ENCODE measurements at regions of chr1 and their contacts with region 1.

Region 1: GRCh38 chr1:100423832-100424337 is 71.6 kb downstream of the CDC14A start:
- DNase-seq: peak in 17 of 35 experiments; percentile 6 to 56 (median 20)
- ATAC-seq: peak; percentile 69 to 76 (median 74)
- H3K4me3 ChIP-seq: peak overlapping the region in 1 of 2 donors; percentile 35
- H3K4me3 Mint-ChIP-seq: peak overlapping the region; percentile 80 to 89 (median 82)
- H3K27ac ChIP-seq: peak overlapping the region; percentile 71
- H3K27ac Mint-ChIP-seq: peak overlapping the region; percentile 97 to 98
- H3K4me1 ChIP-seq: peaks cover 28 to 30% of the 10 kb centered on the region in 2 experiments
- H3K4me1 Mint-ChIP-seq: peaks cover 61 to 82% (median 81%) of the 10 kb centered on the region in 3 donors
- H3K27me3 ChIP-seq: no peaks in the 10 kb centered on the region
- H3K27me3 Mint-ChIP-seq: no peaks in the 10 kb centered on the region

Region 2: GRCh38 chr1:100351095-100351891 is 72.6 kb before region 1 on chr1:
- CTCF ChIA-PET with region 1: interaction called in 1 of 2 experiments, 13 read pairs
- POLR2A ChIA-PET with region 1: interaction called, 6 to 17 read pairs
- DNase-seq: peak; percentile 71 to 92 (median 85)
- ATAC-seq: peak; percentile 66 to 79 (median 70)
- H3K4me3 ChIP-seq: peak overlapping the region; percentile 67 to 96
- H3K4me3 Mint-ChIP-seq: peak overlapping the region; percentile 90 to 100 (median 96)
- H3K27ac ChIP-seq: peak overlapping the region; percentile 87
- H3K27ac Mint-ChIP-seq: peak overlapping the region; percentile 95 to 98
- H3K4me1 ChIP-seq: peaks cover 16 to 22% of the 10 kb centered on the region in 2 experiments
- H3K4me1 Mint-ChIP-seq: peaks cover 27 to 39% (median 30%) of the 10 kb centered on the region in 3 donors
- H3K27me3 ChIP-seq: no peaks in the 10 kb centered on the region
- H3K27me3 Mint-ChIP-seq: no peaks in the 10 kb centered on the region

Region 3: GRCh38 chr1:100413035-100413434 is 10.8 kb before region 1 on chr1:
- CTCF ChIA-PET with region 1: interaction called, 3 to 12 read pairs
- POLR2A ChIA-PET with region 1: interaction called, 7 to 8 read pairs
- DNase-seq: no peak
- ATAC-seq: peak in 3 of 4 experiments; percentile 34 to 65 (median 49)
- H3K4me3 ChIP-seq: no peak overlapping the region
- H3K4me3 Mint-ChIP-seq: peak overlapping the region; percentile 7 to 50 (median 38)
- H3K27ac ChIP-seq: peak overlapping the region; percentile 65
- H3K27ac Mint-ChIP-seq: peak overlapping the region; percentile 82 to 92
- H3K4me1 ChIP-seq: peaks cover 43 to 47% of the 10 kb centered on the region in 2 experiments
- H3K4me1 Mint-ChIP-seq: peaks cover 84 to 88% (median 86%) of the 10 kb centered on the region in 3 donors
- H3K27me3 ChIP-seq: no peaks in the 10 kb centered on the region
- H3K27me3 Mint-ChIP-seq: no peaks in the 10 kb centered on the region

Region 4: GRCh38 chr1:100443811-100444571 is 20.1 kb after region 1 on chr1:
- CTCF ChIA-PET with region 1: interaction called, 5 to 8 read pairs
- POLR2A ChIA-PET with region 1: interaction called, 4 to 13 read pairs
- DNase-seq: peak in 7 of 35 experiments; percentile 3 to 66 (median 18)
- ATAC-seq: peak; percentile 4 to 29 (median 27)
- H3K4me3 ChIP-seq: no peak overlapping the region
- H3K4me3 Mint-ChIP-seq: peak overlapping the region; percentile 46 to 75 (median 67)
- H3K27ac ChIP-seq: peak overlapping the region; percentile 97
- H3K27ac Mint-ChIP-seq: peak overlapping the region; percentile 95 to 98
- H3K4me1 ChIP-seq: peaks cover 56 to 80% of the 10 kb centered on the region in 2 experiments
- H3K4me1 Mint-ChIP-seq: peaks cover 85 to 89% (median 88%) of the 10 kb centered on the region in 3 donors
- H3K27me3 ChIP-seq: no peaks in the 10 kb centered on the region
- H3K27me3 Mint-ChIP-seq: no peaks in the 10 kb centered on the region

Measured in T-cell (primary cell).